ENCODE measurements at regions of chr4 and their contacts with region 1.

Region 1: DNA sequence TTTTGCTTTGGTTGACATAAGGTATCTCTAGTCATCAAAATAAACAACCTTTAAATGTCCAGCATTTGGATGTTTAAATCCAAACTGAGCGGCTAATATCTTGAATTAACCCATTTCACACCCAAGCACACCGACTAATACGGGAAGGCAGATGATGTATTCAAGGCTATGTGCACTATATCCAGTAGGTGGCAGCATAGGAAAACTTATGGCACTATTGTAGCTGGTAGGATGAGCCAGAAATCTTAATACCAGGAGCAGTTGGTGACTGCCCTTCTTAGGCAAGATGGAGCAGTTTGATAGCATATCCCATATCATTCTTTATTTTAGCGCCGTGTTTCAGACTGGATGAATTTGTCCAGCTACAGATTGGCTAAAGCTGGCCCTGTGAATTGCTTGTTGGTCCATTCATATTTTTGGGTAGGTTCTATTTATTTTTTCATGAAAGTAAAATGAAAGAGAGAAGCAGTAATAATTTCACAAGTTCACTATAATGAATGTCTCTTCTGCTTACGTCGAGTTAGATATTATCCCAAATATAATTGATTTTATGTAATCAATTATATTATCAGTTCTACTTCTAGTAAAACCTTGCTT is 24.4 kb downstream of the UCHL1 start:
- DNase-seq: no peak
- ATAC-seq: peak; percentile 95

Region 2: GRCh38 chr4:41661442-41662076 is 380.4 kb after region 1 on chr4:
- intact Hi-C with region 1: loop called (anchors 2 kb)
- DNase-seq: peak; percentile 63
- ATAC-seq: peak; percentile 51

Measured in left ventricle myocardium superior (tissue), 1 donor.